ENCODE measurements at regions of chr18 and their contacts with region 1.

Region 1: GRCh38 chr18:59268721-59269562 is 4.3 kb downstream of the RAX start:
- DNase-seq: peak; percentile 72
- H3K4me3 Mint-ChIP-seq: peak overlapping the region; percentile 29
- H3K27ac Mint-ChIP-seq: no peak overlapping the region
- H3K4me1 Mint-ChIP-seq: peaks cover 43% of the 10 kb centered on the region
- H3K27me3 Mint-ChIP-seq: peaks cover 79% of the 10 kb centered on the region

Region 2: GRCh38 chr18:59085797-59086196 is 183.1 kb before region 1 on chr18:
- CTCF ChIA-PET with region 1: interaction called, 22 read pairs
- POLR2A ChIA-PET with region 1: no interaction called
- intact Hi-C with region 1: loop called (anchors 1 kb)
- DNase-seq: no peak
- H3K4me3 Mint-ChIP-seq: no peak overlapping the region
- H3K27ac Mint-ChIP-seq: no peak overlapping the region
- H3K4me1 Mint-ChIP-seq: peaks cover 8% of the 10 kb centered on the region
- H3K27me3 Mint-ChIP-seq: peaks cover 16% of the 10 kb centered on the region

Region 3: GRCh38 chr18:59220784-59221765 is 47.9 kb before region 1 on chr18:
- CTCF ChIA-PET with region 1: no interaction called
- POLR2A ChIA-PET with region 1: no interaction called
- intact Hi-C with region 1: loop called (anchors 2 kb)
- DNase-seq: no peak
- H3K4me3 Mint-ChIP-seq: no peak overlapping the region
- H3K27ac Mint-ChIP-seq: no peak overlapping the region
- H3K4me1 Mint-ChIP-seq: peaks cover 12% of the 10 kb centered on the region
- H3K27me3 Mint-ChIP-seq: peaks cover 57% of the 10 kb centered on the region

Region 4: DNA sequence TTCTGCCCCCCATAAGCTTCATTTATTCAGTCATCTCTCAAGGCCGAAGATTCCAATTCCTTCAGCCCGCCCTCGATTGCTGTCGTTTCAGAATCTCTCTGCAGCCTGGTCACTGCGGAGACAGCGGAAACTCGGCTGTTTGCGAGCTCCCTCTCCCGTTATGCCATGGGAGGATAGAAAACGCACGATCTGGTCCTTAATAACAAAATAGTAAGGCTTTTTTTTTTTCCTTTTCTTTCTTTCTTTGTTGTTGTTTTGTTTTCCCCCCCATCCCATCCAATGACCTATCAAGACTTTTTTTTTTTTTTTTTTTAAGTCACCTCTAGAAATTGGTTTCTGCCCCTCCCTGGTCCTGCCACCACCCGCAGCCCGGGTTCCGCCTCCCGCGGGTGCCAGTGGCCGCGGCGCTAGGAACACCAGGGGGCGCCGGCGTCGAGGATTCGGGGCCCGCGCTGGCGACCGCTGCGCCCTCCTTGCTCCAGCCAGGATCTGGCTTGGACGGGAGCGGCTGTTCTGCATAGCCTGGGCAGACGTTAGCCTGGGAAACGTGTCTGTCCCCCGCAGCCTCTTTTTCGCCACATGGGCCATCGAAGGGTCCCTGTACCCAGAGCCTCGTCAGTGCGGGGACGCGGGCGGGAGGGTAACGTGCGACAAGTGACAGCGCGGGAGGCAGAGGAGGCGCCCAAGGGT is 39.5 kb after region 1 on chr18:
- CTCF ChIA-PET with region 1: interaction called, 8 read pairs
- POLR2A ChIA-PET with region 1: no interaction called
- intact Hi-C with region 1: loop called (anchors 5 kb)
- DNase-seq: peak; percentile 75
- H3K4me3 Mint-ChIP-seq: no peak overlapping the region
- H3K27ac Mint-ChIP-seq: no peak overlapping the region
- H3K4me1 Mint-ChIP-seq: peaks cover 3% of the 10 kb centered on the region
- H3K27me3 Mint-ChIP-seq: peaks cover 37% of the 10 kb centered on the region

Region 5: GRCh38 chr18:59697236-59697932 is 428.4 kb after region 1 on chr18 and contains the start of gene CCBE1:
- CTCF ChIA-PET with region 1: no interaction called
- POLR2A ChIA-PET with region 1: no interaction called
- intact Hi-C with region 1: loop called (anchors 5 kb)
- DNase-seq: peak; percentile 61
- H3K4me3 Mint-ChIP-seq: no peak within 1 kb of the TSS
- H3K27ac Mint-ChIP-seq: no peak within 1 kb of the TSS
- H3K4me1 Mint-ChIP-seq: peaks cover 9% of the 10 kb centered on the region
- H3K27me3 Mint-ChIP-seq: peaks cover 42% of the 10 kb centered on the region
- total RNA-seq, gene CCBE1: 0.36 TPM in 1 of 2 experiments, not detected in the other